ENCODE measurements at regions of chr9 and their contacts with region 1.

Region 1: GRCh38 chr9:13750061-13750460 is 470.6 kb upstream of the MPDZ start:
- DNase-seq: no peak
- H3K4me3 ChIP-seq: no peak overlapping the region
- H3K27ac ChIP-seq: no peak overlapping the region
- H3K4me1 ChIP-seq: no peaks in the 10 kb centered on the region
- H3K27me3 ChIP-seq: no peaks in the 10 kb centered on the region
- CTCF ChIP-seq: no peak
- EP300 ChIP-seq: no peak
- POLR2A ChIP-seq: no peak

Region 2: GRCh38 chr9:13810510-13810909 is 60.4 kb after region 1 on chr9:
- intact Hi-C with region 1: loop called (anchors 10 kb)
- DNase-seq: no peak
- H3K4me3 ChIP-seq: no peak overlapping the region
- H3K27ac ChIP-seq: no peak overlapping the region
- H3K4me1 ChIP-seq: no peaks in the 10 kb centered on the region
- H3K27me3 ChIP-seq: no peaks in the 10 kb centered on the region
- CTCF ChIP-seq: no peak
- EP300 ChIP-seq: no peak
- POLR2A ChIP-seq: no peak